ENCODE measurements at regions of chr1 and their contacts with region 1.

Region 1: GRCh38 chr1:184386312-184387068 is at the start of gene C1orf21:
- DNase-seq: peak; percentile 94
- ATAC-seq: peak; percentile 98
- total RNA-seq, gene C1orf21: 54.5 TPM

Region 2: GRCh38 chr1:184242507-184242943 is 144.0 kb before region 1 on chr1:
- intact Hi-C with region 1: loop called (anchors 5 kb)
- DNase-seq: no peak
- ATAC-seq: peak; percentile 84

Region 3: DNA sequence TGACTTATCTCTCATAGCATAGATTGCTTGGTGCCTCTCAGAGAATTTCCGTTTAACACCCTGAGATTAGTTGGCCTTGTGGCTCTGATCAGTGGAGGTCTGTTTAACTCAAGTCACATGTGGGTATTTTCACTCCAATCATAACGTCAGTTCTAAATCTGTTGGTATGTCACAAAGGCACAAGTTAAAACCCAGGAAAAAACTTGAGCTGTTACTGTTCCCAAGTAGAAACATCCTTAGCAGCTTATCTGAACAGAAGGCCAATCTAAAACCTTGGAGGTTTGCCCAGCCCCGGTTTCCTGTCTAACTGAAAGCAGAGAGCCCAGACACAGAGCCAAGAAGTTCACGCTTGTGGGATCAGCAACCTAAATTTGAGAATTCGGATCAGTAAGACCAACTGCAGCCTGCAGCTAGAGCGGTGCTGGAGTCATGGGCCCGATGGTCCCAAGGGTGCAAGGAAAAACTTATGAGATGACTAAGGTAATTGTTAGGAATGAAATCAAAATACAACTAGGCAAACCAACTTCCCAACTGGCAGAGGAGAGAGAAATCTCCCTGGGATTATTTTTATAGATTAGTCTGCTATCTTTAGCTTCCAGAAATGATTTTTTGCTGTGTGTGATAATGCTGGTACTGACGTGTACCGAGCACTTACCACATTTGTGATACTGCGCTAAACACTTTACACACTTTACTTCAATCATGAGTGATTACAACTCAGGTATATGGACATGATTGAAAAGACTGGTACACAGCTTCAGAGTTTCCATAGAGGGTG is 89.8 kb before region 1 on chr1:
- intact Hi-C with region 1: loop called (anchors 2 kb)
- DNase-seq: peak; percentile 91
- ATAC-seq: peak; percentile 88

Region 4: DNA sequence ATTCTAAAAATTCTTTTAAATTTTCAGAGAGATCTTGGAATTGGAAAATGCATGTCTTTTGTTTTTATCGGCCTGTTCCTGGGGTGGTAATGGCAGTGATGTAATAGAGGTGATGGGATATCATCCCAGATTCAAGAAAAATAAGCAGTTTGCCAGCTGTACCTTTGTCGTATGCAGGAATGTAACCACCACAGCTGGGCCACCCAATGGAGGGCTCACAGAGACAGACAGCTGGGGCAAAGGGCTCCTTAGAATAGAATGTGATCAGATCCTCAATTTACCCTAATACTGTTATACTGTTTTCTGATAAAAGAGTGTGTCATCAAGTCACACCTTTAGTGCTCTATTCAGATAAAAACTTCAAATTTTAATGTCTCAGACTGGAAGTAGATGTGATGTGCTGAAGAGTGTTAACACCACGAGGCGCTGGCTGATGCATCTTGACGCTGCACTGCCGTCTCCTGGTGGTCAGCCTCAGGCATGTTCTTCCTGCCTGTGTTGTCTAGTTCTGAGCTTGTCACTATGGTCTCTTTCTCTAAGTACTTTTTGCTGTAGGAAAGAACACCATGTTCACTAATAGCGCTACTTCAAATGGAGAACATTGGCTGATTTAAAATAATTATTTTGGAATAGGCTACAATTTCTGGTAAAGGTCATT is 79.1 kb after region 1 on chr1:
- intact Hi-C with region 1: loop called (anchors 2 kb)
- DNase-seq: no peak
- ATAC-seq: peak; percentile 60

Region 5: GRCh38 chr1:184483101-184483683 is 96.7 kb after region 1 on chr1:
- intact Hi-C with region 1: loop called (anchors 5 kb)
- DNase-seq: no peak
- ATAC-seq: peak; percentile 65

Region 6: DNA sequence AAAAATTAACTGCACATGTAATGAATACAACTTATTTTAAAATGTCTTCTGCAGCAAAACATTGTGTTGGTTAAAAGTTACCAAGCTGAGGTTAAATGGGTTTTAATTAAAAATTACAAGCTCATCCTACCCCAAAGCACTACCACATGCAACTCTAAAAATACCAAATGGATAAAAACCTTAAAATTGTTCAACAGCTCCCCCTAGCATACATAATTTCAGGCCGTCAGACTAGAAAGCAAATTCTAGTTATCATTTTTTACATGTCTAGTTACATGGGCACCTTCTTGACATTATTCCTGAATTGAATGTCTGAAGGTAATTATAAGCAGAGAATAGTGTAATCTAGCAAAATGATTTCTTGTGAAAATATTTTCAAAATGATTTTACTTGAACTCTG is 176.8 kb after region 1 on chr1:
- intact Hi-C with region 1: loop called (anchors 2 kb)
- DNase-seq: no peak
- ATAC-seq: peak; percentile 47

Region 7: DNA sequence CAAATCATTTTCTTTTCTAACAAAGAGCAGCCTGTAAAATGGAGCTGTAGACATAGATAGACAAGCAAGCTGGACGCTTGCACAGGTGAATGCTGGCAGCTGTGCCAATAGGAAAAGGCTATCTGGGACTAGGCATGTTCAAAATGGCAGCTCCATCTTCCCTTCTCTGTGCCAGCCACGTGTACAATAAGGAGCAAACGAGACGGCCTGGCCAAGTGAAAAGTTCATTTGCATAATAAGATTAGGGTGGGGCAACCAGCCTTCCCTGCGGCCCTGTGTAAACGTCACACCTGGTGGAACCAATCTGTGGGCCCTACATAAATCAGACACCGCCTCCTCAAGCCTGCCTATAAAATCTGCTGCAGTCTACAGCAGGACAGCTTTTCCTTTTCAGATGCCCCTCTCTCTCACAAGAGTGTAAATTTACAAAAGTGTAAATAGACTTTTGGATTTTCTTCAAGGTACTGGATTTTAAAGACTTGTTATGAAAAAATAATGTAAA is 384.8 kb after region 1 on chr1:
- intact Hi-C with region 1: no loop called
- DNase-seq: no peak
- ATAC-seq: no peak

Measured in Right ventricle myocardium inferior (tissue), 1 donor.